ENCODE measurements at regions of chr10 and their contacts with region 1.

Region 1: DNA sequence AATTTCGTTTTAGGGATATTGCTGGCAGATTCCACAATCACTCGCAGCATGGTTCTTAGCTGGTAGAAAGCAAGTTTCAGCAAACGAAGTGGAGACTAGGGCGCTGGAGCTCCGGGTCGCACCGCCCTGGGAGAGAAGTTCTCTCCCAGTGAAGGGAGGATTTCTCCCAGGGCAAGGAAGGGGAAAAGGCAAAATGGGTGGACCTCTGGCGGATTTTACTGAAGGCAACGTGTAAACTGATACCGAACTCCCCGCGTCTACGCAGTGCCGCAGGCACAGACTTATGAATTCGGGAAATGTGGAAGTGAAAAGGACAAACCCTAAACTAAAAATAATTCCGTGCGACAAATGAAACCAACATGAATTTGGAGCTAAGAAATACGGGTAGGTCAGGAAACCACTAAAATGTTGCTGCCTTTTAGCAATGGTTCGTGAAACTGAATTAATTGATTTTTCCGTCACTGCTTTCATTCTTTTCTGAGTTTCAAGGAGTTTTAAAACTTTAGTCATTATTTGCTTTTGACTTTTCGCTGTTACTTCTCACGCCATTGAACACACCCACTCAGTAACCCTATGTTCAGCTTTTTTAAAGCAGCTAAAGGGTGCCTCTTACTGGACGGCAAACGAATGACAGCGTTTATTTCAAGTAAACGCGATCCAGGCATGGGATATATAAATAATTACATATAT is at the start of gene MYOF:
- DNase-seq: peak; percentile 56 to 75
- H3K4me3 ChIP-seq: peak within 1 kb of the TSS; percentile 67
- H3K27ac ChIP-seq: peak within 1 kb of the TSS; percentile 99
- H3K4me1 ChIP-seq: 0 out of 2 replicates have a peak, but pooled peaks cover 4% of the 10 kb centered on the region
- H3K27me3 ChIP-seq: no peaks in the 10 kb centered on the region
- CTCF ChIP-seq: peak; percentile 43; the same call in 1 of the 2 replicates
- total RNA-seq, gene MYOF: 255 and 274 TPM in 2 replicates

Region 2: GRCh38 chr10:92131271-92131820 is 1350.9 kb before region 1 on chr10:
- CTCF ChIA-PET with region 1: no interaction called
- POLR2A ChIA-PET with region 1: no interaction called
- intact Hi-C with region 1: no loop called
- DNase-seq: no peak
- H3K4me3 ChIP-seq: no peak overlapping the region
- H3K27ac ChIP-seq: no peak overlapping the region
- H3K4me1 ChIP-seq: peaks cover 5% of the 10 kb centered on the region; the same call in 1 of the 2 replicates
- H3K27me3 ChIP-seq: no peaks in the 10 kb centered on the region
- CTCF ChIP-seq: no peak

Region 3: DNA sequence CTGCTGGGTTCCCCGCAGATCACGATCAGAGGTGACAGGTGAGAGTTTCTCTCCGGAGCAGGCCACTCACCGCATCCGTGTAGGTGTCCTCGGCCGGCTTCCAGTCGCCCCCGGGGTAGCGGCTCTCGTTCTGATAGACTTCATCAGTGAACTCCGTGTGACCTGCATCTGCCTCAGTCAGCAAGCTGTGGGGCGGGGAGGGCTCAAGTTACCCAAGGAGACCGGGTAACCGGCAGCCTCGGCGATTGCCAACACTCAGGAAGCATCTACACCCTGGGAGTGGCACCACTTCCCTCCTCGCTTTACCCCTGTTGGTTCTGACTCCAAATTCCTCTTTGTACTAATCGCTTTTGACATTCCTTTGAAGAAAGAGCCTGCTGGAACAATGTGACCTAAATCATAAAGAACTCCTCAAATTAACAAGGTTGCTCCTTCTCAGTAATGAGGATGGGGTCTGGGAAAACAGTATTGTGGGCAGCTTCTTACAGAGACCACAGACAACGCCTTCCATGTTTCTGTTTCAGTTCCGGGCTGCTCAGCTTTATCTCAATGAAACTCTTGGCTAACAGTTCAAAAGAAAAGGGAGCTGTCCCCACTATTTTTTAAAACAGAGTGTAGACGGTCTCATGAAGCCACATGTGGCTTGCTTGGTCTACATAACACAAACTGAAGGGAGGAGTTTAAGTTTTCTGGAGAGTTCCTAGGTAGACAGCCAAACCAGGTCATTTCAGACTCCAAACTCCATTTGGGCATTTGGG is 118.2 kb before region 1 on chr10:
- CTCF ChIA-PET with region 1: no interaction called
- POLR2A ChIA-PET with region 1: interaction called, 19 read pairs
- intact Hi-C with region 1: no loop called
- DNase-seq: peak; percentile 64 to 68
- H3K4me3 ChIP-seq: no peak overlapping the region
- H3K27ac ChIP-seq: 0 out of 2 replicates have a peak overlapping the region, but pooled peaks have one; percentile 9
- H3K4me1 ChIP-seq: no peaks in the 10 kb centered on the region
- H3K27me3 ChIP-seq: no peaks in the 10 kb centered on the region
- CTCF ChIP-seq: no peak

Region 4: DNA sequence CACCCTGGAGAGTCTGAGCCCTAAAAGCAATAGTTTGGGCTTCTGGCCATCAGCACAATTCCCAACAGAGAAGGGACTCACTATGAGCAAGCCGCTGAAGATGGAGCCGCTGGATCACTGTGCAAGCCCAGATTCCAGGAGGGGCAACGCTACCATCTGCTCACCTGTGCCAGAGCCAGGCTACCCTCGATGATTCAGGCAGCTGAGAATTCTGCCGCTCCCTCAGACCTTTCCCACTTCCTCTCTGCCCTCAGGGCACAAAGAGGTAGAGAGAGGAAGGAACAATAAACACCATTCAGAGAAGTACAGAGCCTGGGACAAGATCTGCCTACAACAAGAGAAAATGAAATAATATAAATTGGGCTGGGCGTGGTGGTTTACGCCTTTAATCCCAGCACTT is 98.3 kb before region 1 on chr10:
- CTCF ChIA-PET with region 1: interaction called, 5 read pairs
- POLR2A ChIA-PET with region 1: interaction called, 18 read pairs
- intact Hi-C with region 1: no loop called
- DNase-seq: peak; percentile 85 to 95
- H3K4me3 ChIP-seq: peak overlapping the region; percentile 49; the same call in 1 of the 2 replicates
- H3K27ac ChIP-seq: peak overlapping the region; percentile 98
- H3K4me1 ChIP-seq: peaks cover 23% of the 10 kb centered on the region
- H3K27me3 ChIP-seq: no peaks in the 10 kb centered on the region
- CTCF ChIP-seq: no peak

Region 5: GRCh38 chr10:93437088-93437945 is 45.0 kb before region 1 on chr10:
- CTCF ChIA-PET with region 1: no interaction called
- POLR2A ChIA-PET with region 1: interaction called, 9 read pairs
- intact Hi-C with region 1: loop called (anchors 1 kb)
- DNase-seq: peak; percentile 74 to 95
- H3K4me3 ChIP-seq: peak overlapping the region; percentile 37; the same call in 1 of the 2 replicates
- H3K27ac ChIP-seq: peak overlapping the region; percentile 99
- H3K4me1 ChIP-seq: peaks cover 75% of the 10 kb centered on the region
- H3K27me3 ChIP-seq: no peaks in the 10 kb centered on the region
- CTCF ChIP-seq: no peak

Region 6: DNA sequence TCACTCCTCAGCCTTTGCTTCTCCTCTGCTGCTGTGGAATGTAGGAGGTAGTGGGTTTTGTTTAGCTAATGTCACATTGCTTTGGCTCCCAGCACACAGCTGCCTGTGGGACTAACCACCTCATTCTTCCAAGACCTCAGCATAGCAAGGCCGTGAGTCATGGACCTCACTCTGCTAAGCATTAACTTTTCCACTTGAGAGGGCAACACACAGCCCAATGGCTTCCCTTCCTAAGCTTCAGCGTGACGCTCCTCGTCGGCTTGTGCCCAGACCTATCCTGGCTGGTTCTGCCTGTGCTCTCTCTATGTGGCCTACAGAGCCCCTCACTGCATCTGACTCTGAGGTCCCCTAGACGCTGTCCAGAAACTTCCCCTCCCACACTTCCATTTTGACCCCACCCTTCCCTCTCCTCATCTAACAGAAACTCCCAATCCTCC is 23.5 kb before region 1 on chr10:
- CTCF ChIA-PET with region 1: interaction called, 12 read pairs
- POLR2A ChIA-PET with region 1: interaction called, 10 read pairs
- intact Hi-C with region 1: loop called (anchors 1 kb)
- DNase-seq: peak; percentile 86 to 91
- H3K4me3 ChIP-seq: no peak overlapping the region
- H3K27ac ChIP-seq: peak overlapping the region; percentile 90
- H3K4me1 ChIP-seq: peaks cover 14% of the 10 kb centered on the region
- H3K27me3 ChIP-seq: no peaks in the 10 kb centered on the region
- CTCF ChIP-seq: no peak

Region 7: DNA sequence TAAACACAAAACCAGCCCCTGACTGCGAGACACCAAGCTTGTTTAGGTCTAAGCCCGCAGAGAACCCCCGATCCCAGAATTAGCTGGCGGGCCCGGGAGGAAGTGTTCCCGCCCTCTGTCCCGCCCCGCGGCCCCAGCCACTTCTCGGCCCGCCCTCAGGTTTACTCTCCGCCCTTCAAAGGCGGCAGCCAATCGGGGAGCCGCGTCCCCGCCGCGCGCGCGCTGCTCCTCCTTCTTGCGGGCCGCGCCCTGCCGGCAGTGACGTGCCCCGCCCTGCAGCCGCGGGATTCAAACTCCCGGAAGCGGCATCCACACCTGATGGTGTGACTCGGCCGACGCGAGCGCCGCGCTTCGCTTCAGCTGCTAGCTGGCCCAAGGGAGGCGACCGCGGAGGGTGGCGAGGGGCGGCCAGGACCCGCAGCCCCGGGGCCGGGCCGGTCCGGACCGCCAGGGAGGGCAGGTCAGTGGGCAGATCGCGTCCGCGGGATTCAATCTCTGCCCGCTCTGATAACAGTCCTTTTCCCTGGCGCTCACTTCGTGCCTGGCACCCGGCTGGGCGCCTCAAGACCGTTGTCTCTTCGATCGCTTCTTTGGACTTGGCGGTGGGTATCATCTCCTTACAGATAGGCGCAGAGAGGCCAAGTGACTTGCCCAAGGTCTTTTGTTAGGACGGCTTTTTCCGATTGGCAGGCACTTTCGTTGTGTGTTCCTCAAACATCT is 14.2 kb after region 1 on chr10 and contains the start of gene CEP55:
- CTCF ChIA-PET with region 1: interaction called, 3 read pairs
- POLR2A ChIA-PET with region 1: interaction called, 14 read pairs
- intact Hi-C with region 1: no loop called
- DNase-seq: peak; percentile 66 to 92
- H3K4me3 ChIP-seq: peak within 1 kb of the TSS; percentile 58
- H3K27ac ChIP-seq: no peak within 1 kb of the TSS
- H3K4me1 ChIP-seq: no peaks in the 10 kb centered on the region
- H3K27me3 ChIP-seq: no peaks in the 10 kb centered on the region
- CTCF ChIP-seq: no peak
- total RNA-seq, gene CEP55: 29.6 and 38.9 TPM in 2 replicates